ENCODE measurements at regions of chr14 and their contacts with region 1.

Region 1: GRCh38 chr14:100067971-100068959 is 3.0 kb downstream of the EVL start:
- DNase-seq: peak; percentile 92
- H3K4me3 Mint-ChIP-seq: peak overlapping the region; percentile 90
- H3K27ac Mint-ChIP-seq: peak overlapping the region; percentile 99
- H3K4me1 Mint-ChIP-seq: peaks cover 46% of the 10 kb centered on the region
- H3K27me3 Mint-ChIP-seq: no peaks in the 10 kb centered on the region

Region 2: DNA sequence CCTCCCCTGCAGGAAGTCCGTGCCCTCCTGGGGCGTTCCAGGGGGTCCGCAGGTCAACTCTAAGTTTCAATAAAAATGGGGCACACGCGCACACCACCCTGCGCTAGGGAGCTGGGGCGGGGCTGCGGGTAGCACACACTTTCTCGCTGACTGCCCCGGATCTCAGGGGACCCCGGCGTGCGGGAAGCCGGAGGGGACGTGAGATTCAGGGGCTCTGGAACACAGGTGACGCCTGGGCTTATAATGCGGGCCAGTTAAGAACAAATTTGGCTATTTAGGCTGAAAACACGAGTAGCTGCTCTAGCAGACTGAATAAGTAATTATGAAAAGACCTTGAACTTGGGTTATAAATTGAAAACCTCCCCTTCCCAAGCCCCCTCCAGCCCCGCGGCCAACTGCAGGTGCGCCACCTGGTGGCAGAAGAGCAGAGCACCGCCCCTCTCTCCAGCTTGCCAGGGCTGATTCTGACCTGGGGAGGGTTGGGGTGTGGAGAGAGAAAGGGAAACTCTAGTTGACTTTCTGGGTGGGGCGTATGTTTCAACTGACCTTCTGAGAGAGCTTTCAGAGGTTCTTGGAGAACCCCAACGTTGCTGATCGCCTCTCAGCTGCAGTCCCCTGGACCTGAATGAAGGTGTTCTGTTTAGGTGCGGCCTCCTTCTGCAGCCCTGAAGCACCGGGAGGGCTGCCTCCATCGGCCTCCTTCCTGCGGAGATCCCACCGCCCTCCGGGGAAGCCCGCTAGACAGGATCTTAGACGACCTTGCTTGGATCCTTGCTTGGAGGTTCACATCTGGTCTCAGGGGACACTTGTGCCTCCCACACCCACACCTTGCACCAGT is 121.4 kb before region 1 on chr14:
- CTCF ChIA-PET with region 1: no interaction called
- DNase-seq: peak; percentile 62
- H3K4me3 Mint-ChIP-seq: no peak overlapping the region
- H3K27ac Mint-ChIP-seq: no peak overlapping the region
- H3K4me1 Mint-ChIP-seq: peaks cover 4% of the 10 kb centered on the region
- H3K27me3 Mint-ChIP-seq: peaks cover 57% of the 10 kb centered on the region

Region 3: DNA sequence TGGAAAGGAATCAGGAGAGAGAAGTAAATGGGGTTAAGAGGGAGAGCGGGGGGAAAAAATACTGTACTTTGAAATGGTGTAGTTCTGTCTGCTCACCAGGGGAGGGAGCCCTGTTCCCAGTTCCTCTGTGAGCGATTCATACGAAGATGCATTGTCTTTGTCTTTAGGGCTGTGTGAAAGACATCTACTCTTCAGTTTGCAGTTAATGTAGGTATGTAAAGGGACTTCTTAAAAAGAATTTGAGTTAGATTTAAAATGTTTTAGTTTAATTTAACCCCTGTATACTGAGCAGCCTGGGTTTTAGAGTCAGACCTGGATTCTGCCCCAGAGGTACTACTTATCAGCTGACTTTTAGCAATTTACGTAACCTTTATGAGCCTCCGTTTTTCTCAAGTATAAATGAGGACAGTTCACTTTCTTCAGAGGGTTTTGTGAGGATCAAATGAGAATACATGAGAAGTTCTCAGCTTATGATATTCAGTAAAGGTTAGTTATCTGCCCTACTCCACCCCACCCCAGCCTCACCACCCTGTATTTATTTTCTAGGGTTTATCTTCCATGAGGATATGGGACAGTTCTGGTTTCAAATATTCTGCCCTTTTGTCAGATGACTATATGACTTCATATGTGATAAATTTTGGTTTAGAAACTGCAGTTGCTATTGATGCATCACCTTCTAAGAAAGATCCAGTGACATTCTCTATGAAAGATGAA is 85.6 kb before region 1 on chr14:
- CTCF ChIA-PET with region 1: interaction called, 43 read pairs
- DNase-seq: peak; percentile 71
- H3K4me3 Mint-ChIP-seq: no peak overlapping the region
- H3K27ac Mint-ChIP-seq: no peak overlapping the region
- H3K4me1 Mint-ChIP-seq: peaks cover 17% of the 10 kb centered on the region
- H3K27me3 Mint-ChIP-seq: no peaks in the 10 kb centered on the region

Region 4: DNA sequence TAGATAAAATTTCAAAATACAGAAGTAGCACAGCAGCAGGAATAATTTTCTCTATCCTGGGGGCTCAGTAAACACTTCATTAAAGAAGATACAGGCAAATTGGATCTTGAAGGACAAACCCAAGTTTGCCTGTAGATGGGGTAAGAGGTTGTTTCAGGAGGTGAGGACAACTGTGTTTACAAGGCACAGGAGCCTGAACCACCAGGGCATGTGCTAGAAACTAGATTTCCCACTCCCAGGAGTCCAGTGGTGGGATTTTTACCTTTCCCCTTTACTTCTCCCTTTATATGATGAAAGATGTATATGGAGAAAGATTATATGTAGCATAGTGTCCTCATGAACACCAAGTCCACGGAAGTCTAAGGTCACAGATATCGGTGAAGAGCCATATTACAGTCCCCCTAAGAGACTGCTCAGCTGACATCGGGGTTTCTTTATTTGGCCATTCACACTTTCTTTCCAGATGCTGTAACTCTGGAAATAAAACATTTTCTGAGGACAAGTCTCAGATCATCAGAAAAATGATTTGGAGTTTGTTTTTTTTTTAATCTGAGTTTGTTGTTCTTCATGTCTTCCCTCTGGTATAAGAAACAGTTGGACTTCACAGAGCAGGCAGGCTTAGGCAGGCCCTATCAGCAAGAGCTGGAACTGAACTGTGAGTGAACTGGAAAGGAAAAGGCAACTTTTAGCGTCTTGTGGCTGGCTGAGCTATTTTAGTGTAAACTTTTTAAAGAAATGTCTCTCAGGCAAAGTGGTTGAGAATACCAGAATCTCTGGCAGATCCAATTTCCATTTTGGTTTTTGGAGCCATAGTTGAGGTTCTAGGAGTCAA is 11.1 kb before region 1 on chr14:
- CTCF ChIA-PET with region 1: interaction called, 62 read pairs
- DNase-seq: peak; percentile 49
- H3K4me3 Mint-ChIP-seq: peak overlapping the region; percentile 30
- H3K27ac Mint-ChIP-seq: peak overlapping the region; percentile 24
- H3K4me1 Mint-ChIP-seq: peaks cover 58% of the 10 kb centered on the region
- H3K27me3 Mint-ChIP-seq: no peaks in the 10 kb centered on the region

Region 5: GRCh38 chr14:100078991-100079725 is 10.9 kb after region 1 on chr14:
- CTCF ChIA-PET with region 1: interaction called, 185 read pairs
- DNase-seq: peak; percentile 93
- H3K4me3 Mint-ChIP-seq: peak overlapping the region; percentile 73
- H3K27ac Mint-ChIP-seq: peak overlapping the region; percentile 97
- H3K4me1 Mint-ChIP-seq: peaks cover 99% of the 10 kb centered on the region
- H3K27me3 Mint-ChIP-seq: no peaks in the 10 kb centered on the region

Region 6: DNA sequence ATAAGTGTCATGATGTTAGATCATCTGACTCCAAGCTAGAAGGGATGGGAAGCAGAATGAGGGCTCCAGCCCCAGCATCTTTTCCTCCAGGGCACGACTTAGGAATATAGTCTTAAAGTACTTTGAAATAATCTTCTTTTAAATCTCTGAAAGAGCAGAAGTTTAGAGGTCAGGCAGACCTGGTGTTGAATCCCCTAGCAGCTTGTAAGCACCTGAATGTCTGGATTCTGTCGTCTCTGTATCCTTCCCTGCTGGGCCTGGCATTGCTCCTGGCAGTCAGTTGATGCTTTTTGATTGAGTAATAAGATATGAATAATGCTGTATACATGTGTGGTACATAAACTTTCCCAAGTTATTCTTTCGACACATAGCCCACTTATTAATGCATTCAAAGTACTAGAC is 28.3 kb after region 1 on chr14:
- CTCF ChIA-PET with region 1: interaction called, 488 read pairs
- DNase-seq: no peak
- H3K4me3 Mint-ChIP-seq: no peak overlapping the region
- H3K27ac Mint-ChIP-seq: peak overlapping the region; percentile 73
- H3K4me1 Mint-ChIP-seq: peaks cover 94% of the 10 kb centered on the region
- H3K27me3 Mint-ChIP-seq: no peaks in the 10 kb centered on the region

Measured in activated naive CD4-positive, alpha-beta T cell treated with anti-CD3 and anti-CD28 coated beads, Interleukin-2, amount 10 ng/mL, durations not matched to agents 7 days and 5 days (primary cell).